BJ (cell line): ENCODE measurements at regions of chrX and their contacts with region 1.

Region 1: GRCh38 chrX:37825209-37825842 is 22.0 kb downstream of the DYNLT3 start:
- DNase-seq: no peak
- H3K4me3 ChIP-seq: no peak overlapping the region
- H3K27me3 ChIP-seq: no peaks in the 10 kb centered on the region
- CTCF ChIP-seq: peak; percentile 81

Region 2: DNA sequence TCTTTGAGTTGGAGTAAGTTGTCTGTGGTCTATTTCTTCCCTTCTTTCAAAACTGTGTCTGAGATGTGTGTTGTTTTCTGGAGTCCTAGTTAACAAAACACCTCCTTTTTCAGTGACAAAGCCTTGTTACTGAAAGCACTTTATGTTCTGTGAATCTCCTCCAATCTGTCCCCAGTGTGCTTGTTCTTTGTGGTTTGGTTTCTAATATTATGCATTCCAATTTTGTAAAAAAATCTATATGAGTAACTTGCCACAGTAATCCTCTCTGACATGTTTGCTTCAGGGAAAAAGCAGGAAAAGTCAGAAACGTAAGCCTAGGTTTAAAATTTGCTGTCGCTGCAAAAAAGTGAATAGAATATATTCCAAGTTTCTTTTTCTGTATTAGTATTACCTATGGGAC is 463.7 kb before region 1 on chrX:
- CTCF ChIA-PET with region 1: no interaction called
- POLR2A ChIA-PET with region 1: no interaction called
- DNase-seq: no peak
- H3K4me3 ChIP-seq: no peak overlapping the region
- H3K27me3 ChIP-seq: no peaks in the 10 kb centered on the region
- CTCF ChIP-seq: no peak

Region 3: DNA sequence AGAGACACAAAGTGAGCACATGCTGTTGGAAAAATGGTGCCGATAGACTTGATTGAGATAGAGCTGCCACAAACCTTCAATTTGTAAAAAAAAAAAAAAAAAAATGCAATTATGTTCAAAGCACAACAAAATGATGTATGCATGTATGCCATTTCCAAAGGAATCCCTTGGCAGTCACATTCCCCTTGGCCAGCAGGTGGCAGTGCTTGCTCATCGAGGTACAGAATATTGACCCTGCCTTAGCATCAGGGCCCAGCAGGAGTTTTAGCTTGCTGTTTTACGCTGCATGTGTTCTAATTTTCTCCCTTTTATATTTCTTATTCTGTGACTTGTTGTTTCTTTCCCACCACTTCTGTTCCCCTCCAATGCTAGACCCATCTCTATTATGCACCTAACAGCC is 80.0 kb before region 1 on chrX:
- CTCF ChIA-PET with region 1: interaction called, 18 read pairs
- POLR2A ChIA-PET with region 1: no interaction called
- DNase-seq: no peak
- H3K4me3 ChIP-seq: no peak overlapping the region
- H3K27me3 ChIP-seq: no peaks in the 10 kb centered on the region
- CTCF ChIP-seq: peak; percentile 64

Region 4: GRCh38 chrX:38006291-38006690 is 181.0 kb after region 1 on chrX and contains the start of gene SYTL5:
- CTCF ChIA-PET with region 1: no interaction called
- POLR2A ChIA-PET with region 1: no interaction called
- DNase-seq: no peak
- H3K4me3 ChIP-seq: no peak within 1 kb of the TSS
- H3K27me3 ChIP-seq: no peaks in the 10 kb centered on the region
- CTCF ChIP-seq: no peak
- polyA plus RNA-seq, gene SYTL5: 0.48 and 0.64 TPM in 2 replicates